ENCODE measurements at regions of chr22 and their contacts with region 1.

Region 1: DNA sequence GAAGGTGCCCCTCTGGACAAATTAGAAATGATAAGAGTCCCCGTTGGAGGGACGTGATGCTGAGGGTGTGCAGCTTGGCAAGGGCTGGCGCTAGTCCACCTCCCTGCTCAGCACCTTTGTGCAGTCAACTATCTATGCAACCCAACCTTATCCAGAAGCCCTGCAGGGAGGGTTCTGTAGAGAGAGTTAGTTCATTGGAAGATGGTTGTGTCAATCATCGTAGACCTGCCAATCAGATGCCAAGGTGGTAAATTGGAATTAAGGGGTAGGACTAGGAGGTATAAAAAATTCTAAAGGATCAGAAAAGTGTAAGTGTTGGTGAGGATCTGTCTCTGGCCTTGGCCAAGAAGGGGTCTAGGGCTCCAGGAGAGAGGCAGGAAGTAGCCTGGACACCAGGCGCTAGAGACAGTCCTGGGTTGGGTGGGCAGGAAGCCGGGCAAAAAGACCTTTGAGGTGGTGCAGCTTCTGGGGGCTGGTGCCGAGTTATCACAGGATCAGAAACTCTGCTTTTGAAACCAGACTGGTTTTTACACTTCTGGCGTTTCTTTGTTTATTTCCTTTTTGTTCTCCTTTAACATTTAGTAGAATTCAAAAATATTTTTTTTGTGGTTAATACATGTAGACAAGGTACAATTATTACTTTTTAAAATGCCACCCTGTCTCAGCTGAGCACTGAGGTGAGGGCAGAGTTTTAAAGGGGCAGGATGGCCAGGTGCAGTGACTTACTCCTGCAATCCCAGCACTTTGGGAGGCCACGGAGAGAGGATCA is 1.6 kb downstream of the C1QTNF6 start:
- DNase-seq: peak; percentile 33 to 80 (median 79)
- H3K4me3 ChIP-seq: peak overlapping the region; percentile 25
- H3K4me3 Mint-ChIP-seq: peak overlapping the region; percentile 29 to 81 (median 75)
- H3K27ac ChIP-seq: no peak overlapping the region
- H3K27ac Mint-ChIP-seq: peak overlapping the region; percentile 77 to 98 (median 91)
- H3K4me1 ChIP-seq: peaks cover 55% of the 10 kb centered on the region
- H3K4me1 Mint-ChIP-seq: peaks cover 61 to 82% (median 65%) of the 10 kb centered on the region in 3 donors
- H3K27me3 ChIP-seq: no peaks in the 10 kb centered on the region
- H3K27me3 Mint-ChIP-seq: no peaks in the 10 kb centered on the region

Region 2: DNA sequence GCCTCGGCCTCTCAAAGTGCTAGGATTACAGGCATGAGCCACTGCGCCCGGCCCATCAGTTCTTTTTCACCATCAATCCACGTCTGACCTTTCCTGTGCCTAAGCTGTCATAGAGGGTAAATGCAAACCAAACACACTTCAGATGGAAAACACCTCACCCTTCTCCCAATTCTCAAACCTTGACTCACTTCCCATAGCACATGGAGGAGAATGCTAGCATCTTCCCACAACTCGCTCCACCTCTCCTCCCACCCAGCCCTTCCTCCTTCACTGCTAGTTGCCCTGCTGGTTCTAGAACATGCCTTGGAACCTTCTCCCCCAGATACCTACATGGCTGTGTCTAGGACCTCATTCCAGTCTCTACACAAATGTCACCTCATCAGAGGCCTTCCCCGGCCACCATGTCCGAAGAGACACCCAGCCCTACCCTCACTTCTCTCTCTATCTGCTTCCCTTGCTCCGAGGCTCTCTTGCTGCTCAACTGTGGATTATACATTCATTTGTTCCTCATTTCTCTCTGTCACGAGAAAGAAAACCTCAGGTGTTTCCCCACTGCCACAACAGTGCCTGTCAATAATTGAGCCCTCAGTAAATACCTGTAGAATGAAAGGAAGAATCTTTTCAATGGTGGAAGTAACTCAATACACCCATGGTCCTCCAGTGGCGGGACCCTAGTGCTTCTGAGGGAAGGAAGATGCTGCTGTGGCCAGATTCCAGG is 346.9 kb before region 1 on chr22:
- CTCF ChIA-PET with region 1: no interaction called
- POLR2A ChIA-PET with region 1: no interaction called
- DNase-seq: no peak
- H3K4me3 ChIP-seq: no peak overlapping the region
- H3K4me3 Mint-ChIP-seq: no peak overlapping the region
- H3K27ac ChIP-seq: no peak overlapping the region
- H3K27ac Mint-ChIP-seq: no peak overlapping the region
- H3K4me1 ChIP-seq: no peaks in the 10 kb centered on the region
- H3K4me1 Mint-ChIP-seq: no peaks in the 10 kb centered on the region
- H3K27me3 ChIP-seq: no peaks in the 10 kb centered on the region
- H3K27me3 Mint-ChIP-seq: peaks cover 17 to 69% of the 10 kb centered on the region in 2 donors

Region 3: DNA sequence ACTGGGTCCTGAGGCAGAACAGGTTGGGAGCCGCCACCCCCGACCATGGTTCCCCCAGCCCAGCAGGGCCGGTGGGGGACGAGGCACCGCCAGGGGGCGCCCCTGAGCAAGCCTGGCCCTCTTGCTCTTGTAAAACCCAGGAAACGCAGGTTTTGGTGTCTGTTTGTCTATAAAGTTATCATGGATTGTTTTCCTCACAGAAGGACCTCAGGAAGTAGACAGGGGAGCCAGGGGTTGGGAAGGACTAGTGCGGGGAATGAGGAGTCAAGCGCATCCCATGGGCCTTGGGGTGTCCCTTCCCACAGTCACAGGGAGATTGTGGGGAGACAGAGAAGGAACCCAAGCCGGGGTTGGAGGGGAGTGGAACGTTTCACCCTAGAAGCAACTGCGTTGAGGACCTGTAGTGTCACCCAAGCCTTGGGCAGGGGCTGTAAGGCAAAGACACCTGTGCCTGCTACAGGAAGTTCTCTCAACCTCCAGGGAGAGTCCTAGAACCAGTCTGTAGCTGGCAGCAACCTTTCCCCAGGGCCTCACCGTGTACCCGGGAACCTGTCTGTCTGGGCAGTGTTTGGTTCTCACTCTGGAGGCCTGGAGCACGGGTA is 108.4 kb before region 1 on chr22:
- CTCF ChIA-PET with region 1: interaction called, 5 read pairs
- POLR2A ChIA-PET with region 1: interaction called, 12 read pairs
- DNase-seq: peak; percentile 74 to 87 (median 79)
- H3K4me3 ChIP-seq: no peak overlapping the region
- H3K4me3 Mint-ChIP-seq: peak overlapping the region in 6 of 7 donors; percentile 13 to 66 (median 37)
- H3K27ac ChIP-seq: no peak overlapping the region
- H3K27ac Mint-ChIP-seq: peak overlapping the region; percentile 81 to 100 (median 98)
- H3K4me1 ChIP-seq: peaks cover 38% of the 10 kb centered on the region
- H3K4me1 Mint-ChIP-seq: peaks cover 29 to 41% (median 31%) of the 10 kb centered on the region in 3 donors
- H3K27me3 ChIP-seq: no peaks in the 10 kb centered on the region
- H3K27me3 Mint-ChIP-seq: peaks cover 3 to 10% of the 10 kb centered on the region in 2 donors

Region 4: GRCh38 chr22:37212167-37212906 is 25.9 kb after region 1 on chr22 and contains the start of gene SSTR3:
- CTCF ChIA-PET with region 1: no interaction called
- POLR2A ChIA-PET with region 1: no interaction called
- DNase-seq: no peak
- H3K4me3 ChIP-seq: no peak within 1 kb of the TSS
- H3K4me3 Mint-ChIP-seq: no peak within 1 kb of the TSS
- H3K27ac ChIP-seq: no peak within 1 kb of the TSS
- H3K27ac Mint-ChIP-seq: peak within 1 kb of the TSS in 1 of 8 donors; percentile 92
- H3K4me1 ChIP-seq: peaks cover 35% of the 10 kb centered on the region
- H3K4me1 Mint-ChIP-seq: peaks cover 10 to 25% (median 16%) of the 10 kb centered on the region in 3 donors
- H3K27me3 ChIP-seq: no peaks in the 10 kb centered on the region
- H3K27me3 Mint-ChIP-seq: peaks cover 0 to 1% of the 10 kb centered on the region in 2 donors
- total RNA-seq, gene SSTR3: 0.24 to 0.62 TPM

Region 5: DNA sequence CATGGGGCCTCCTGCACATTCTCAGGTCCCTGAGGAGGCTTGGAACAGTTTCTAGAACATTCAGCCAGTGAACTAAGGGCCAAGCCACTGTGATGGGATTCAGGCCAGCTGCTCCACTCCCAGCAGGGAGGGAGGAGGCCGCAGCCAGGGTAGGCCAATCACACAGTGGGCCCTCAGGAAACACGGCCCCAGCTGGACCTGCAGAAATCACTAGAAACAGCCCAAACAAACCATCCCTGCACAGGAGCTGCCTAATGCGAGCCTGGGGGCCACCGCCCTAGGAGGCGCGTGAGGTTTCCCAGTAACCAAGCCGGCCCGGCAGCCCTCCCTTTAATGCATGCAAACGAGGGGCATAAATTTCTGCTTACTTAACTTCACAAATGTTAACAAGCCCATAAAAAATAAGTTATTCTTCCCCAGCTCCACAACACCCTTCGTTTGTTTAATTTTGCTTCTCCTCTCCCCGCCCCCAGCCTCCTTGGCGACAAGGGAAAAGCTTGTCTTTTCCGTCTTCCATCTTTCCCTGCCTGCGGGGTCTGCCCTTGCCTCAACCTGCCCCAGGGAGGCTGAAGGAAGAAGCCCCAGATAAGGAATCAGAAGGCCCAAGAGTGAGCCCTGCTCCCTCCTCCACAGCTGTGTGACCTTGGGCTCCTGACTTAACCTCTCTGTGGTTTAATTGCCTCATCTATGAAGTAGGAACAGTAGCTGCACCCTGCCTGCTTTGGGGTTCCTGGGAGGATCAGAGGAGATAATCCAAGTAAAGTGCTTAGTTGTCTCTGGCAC is 215.2 kb after region 1 on chr22:
- CTCF ChIA-PET with region 1: no interaction called
- POLR2A ChIA-PET with region 1: no interaction called
- DNase-seq: no peak
- H3K4me3 ChIP-seq: no peak overlapping the region
- H3K4me3 Mint-ChIP-seq: no peak overlapping the region
- H3K27ac ChIP-seq: no peak overlapping the region
- H3K27ac Mint-ChIP-seq: no peak overlapping the region
- H3K4me1 ChIP-seq: no peaks in the 10 kb centered on the region
- H3K4me1 Mint-ChIP-seq: no peaks in the 10 kb centered on the region
- H3K27me3 ChIP-seq: no peaks in the 10 kb centered on the region
- H3K27me3 Mint-ChIP-seq: peaks cover 14% of the 10 kb centered on the region in 2 donors

Region 6: GRCh38 chr22:37472418-37473006 is 286.1 kb after region 1 on chr22:
- CTCF ChIA-PET with region 1: no interaction called
- POLR2A ChIA-PET with region 1: no interaction called
- DNase-seq: peak; percentile 30 to 66 (median 37)
- H3K4me3 ChIP-seq: no peak overlapping the region
- H3K4me3 Mint-ChIP-seq: no peak overlapping the region
- H3K27ac ChIP-seq: no peak overlapping the region
- H3K27ac Mint-ChIP-seq: peak overlapping the region in 6 of 8 donors; percentile 17 to 87 (median 54)
- H3K4me1 ChIP-seq: no peaks in the 10 kb centered on the region
- H3K4me1 Mint-ChIP-seq: peaks cover 8 to 16% (median 10%) of the 10 kb centered on the region in 3 donors
- H3K27me3 ChIP-seq: no peaks in the 10 kb centered on the region
- H3K27me3 Mint-ChIP-seq: no peaks in the 10 kb centered on the region

Measured in CD8-positive, alpha-beta memory T cell (primary cell).